ENCODE measurements at regions of chr5 and their contacts with region 1.

Region 1: GRCh38 chr5:123028222-123028621 is 8.3 kb downstream of the PPIC start:
- DNase-seq: no peak

Region 2: DNA sequence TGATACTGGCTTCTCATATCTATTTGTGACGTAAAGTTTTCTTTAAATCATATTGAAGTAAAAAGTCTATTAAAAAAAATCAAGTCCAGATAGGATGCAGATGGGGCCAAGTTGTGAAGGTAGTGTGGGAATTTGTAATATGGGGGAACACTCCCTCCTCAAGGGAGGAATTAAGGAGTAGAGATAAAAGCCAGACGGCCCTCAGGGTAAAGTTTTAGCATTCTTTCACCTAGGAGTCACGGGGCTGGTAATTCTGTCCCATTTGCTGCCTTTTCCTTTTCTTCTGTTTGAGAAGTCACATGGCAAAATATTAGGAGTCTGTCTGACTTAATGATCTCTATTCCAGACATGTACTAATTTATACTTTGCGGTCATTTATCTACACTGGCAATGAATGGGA is 121.0 kb before region 1 on chr5:
- intact Hi-C with region 1: loop called in 1 of 2 experiments (anchors 10 kb)
- DNase-seq: no peak

Region 3: GRCh38 chr5:123223921-123224320 is 195.7 kb after region 1 on chr5:
- intact Hi-C with region 1: no loop called
- DNase-seq: no peak

Region 4: GRCh38 chr5:123505633-123506032 is 477.4 kb after region 1 on chr5:
- intact Hi-C with region 1: no loop called
- DNase-seq: no peak

Measured in posterior vena cava (tissue), 2 donors.